Endothelial cell of umbilical vein (primary cell): ENCODE measurements at regions of chr7 and their contacts with region 1.

Region 1: DNA sequence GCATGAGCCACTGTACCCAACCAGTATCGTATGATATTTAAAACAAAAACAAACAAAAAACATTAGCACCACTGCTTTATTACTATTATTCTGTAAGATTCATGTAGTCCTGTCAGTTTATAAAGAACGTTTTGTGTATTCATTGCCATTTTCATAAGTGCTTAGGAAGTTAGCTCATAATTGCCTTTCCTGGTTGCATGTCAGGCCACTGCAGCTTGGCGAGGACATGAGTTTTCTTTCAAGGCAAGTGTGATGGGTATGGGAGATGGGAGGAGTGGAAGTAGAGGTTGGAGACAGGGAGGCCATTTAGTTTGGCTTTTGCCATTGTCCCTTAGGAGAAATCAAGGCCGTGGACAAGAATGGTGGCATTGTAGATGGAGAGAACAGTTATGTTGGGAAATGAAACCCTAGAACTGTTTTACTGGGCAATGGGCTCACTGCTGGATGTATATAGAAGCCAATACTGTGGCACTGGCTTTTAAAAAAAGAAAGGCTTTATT is 48.9 kb downstream of the TYW1 start:
- DNase-seq: peak; percentile 45
- H3K4me3 ChIP-seq: no peak overlapping the region
- H3K27ac ChIP-seq: no peak overlapping the region
- H3K4me1 ChIP-seq: peaks cover 5% of the 10 kb centered on the region
- H3K27me3 ChIP-seq: no peaks in the 10 kb centered on the region
- CTCF ChIP-seq: no peak
- POLR2A ChIP-seq: no peak

Region 2: GRCh38 chr7:67302113-67303039 is 256.8 kb after region 1 on chr7:
- CTCF ChIA-PET with region 1: interaction called, 18 read pairs
- POLR2A ChIA-PET with region 1: no interaction called
- dilution Hi-C with region 1: no loop called
- intact Hi-C with region 1: loop called (anchors 10 kb)
- DNase-seq: peak; percentile 99
- H3K4me3 ChIP-seq: peak overlapping the region; percentile 46 to 66 (median 53)
- H3K27ac ChIP-seq: peak overlapping the region; percentile 86
- H3K4me1 ChIP-seq: no peaks in the 10 kb centered on the region
- H3K27me3 ChIP-seq: no peaks in the 10 kb centered on the region
- CTCF ChIP-seq: peak in 1 of 2 donors; percentile 47
- POLR2A ChIP-seq: peak; percentile 85